HCT116 (cell line): ENCODE measurements at regions of chr10 and their contacts with region 1.

Region 1: GRCh38 chr10:59704630-59705029 is 5.0 kb downstream of the SLC16A9 start:
- DNase-seq: no peak
- ATAC-seq: no peak
- H3K4me3 ChIP-seq: no peak overlapping the region
- H3K27ac ChIP-seq: no peak overlapping the region
- H3K4me1 ChIP-seq: peaks cover 2 to 7% of the 10 kb centered on the region in 2 experiments; a peak in 3 of 4 replicates
- H3K27me3 ChIP-seq: no peaks in the 10 kb centered on the region
- CTCF ChIP-seq: no peak
- POLR2A ChIP-seq: no peak
- RAD21 ChIP-seq: no peak

Region 2: GRCh38 chr10:59680199-59680598 is 24.4 kb before region 1 on chr10:
- CTCF ChIA-PET with region 1: no interaction called
- POLR2A ChIA-PET with region 1: no interaction called
- RAD21 ChIA-PET with region 1: no interaction called
- intact Hi-C with region 1: loop called (anchors 1 kb)
- DNase-seq: no peak
- ATAC-seq: no peak
- H3K4me3 ChIP-seq: no peak overlapping the region
- H3K27ac ChIP-seq: no peak overlapping the region
- H3K4me1 ChIP-seq: peaks cover 0 to 11% of the 10 kb centered on the region in 2 experiments; a peak in 2 of 4 replicates
- H3K27me3 ChIP-seq: no peaks in the 10 kb centered on the region
- CTCF ChIP-seq: no peak
- POLR2A ChIP-seq: no peak
- RAD21 ChIP-seq: no peak

Region 3: GRCh38 chr10:59719374-59719773 is 14.7 kb after region 1 on chr10:
- CTCF ChIA-PET with region 1: no interaction called
- POLR2A ChIA-PET with region 1: no interaction called
- RAD21 ChIA-PET with region 1: no interaction called
- intact Hi-C with region 1: no loop called
- DNase-seq: no peak
- ATAC-seq: peak; percentile 46
- H3K4me3 ChIP-seq: no peak overlapping the region
- H3K27ac ChIP-seq: no peak overlapping the region
- H3K4me1 ChIP-seq: no peaks in the 10 kb centered on the region
- H3K27me3 ChIP-seq: no peaks in the 10 kb centered on the region
- CTCF ChIP-seq: peak in 2 of 3 experiments; percentile 34 to 48; a peak in 3 of 6 replicates
- POLR2A ChIP-seq: no peak
- RAD21 ChIP-seq: no peak